ENCODE measurements at regions of chr19 and their contacts with region 1.

Region 1: GRCh38 chr19:34145741-34146202 is 26.5 kb upstream of the LSM14A start:
- DNase-seq: peak; percentile 64
- H3K4me3 Mint-ChIP-seq: no peak overlapping the region
- H3K27ac Mint-ChIP-seq: no peak overlapping the region
- H3K4me1 Mint-ChIP-seq: no peaks in the 10 kb centered on the region
- H3K27me3 Mint-ChIP-seq: no peaks in the 10 kb centered on the region

Region 2: GRCh38 chr19:34041925-34042521 is 103.7 kb before region 1 on chr19:
- CTCF ChIA-PET with region 1: interaction called, 17 read pairs
- POLR2A ChIA-PET with region 1: no interaction called
- DNase-seq: peak; percentile 76
- H3K4me3 Mint-ChIP-seq: no peak overlapping the region
- H3K27ac Mint-ChIP-seq: no peak overlapping the region
- H3K4me1 Mint-ChIP-seq: no peaks in the 10 kb centered on the region
- H3K27me3 Mint-ChIP-seq: peaks cover 6% of the 10 kb centered on the region

Region 3: GRCh38 chr19:34134190-34135053 is 11.3 kb before region 1 on chr19:
- CTCF ChIA-PET with region 1: interaction called, 11 read pairs
- POLR2A ChIA-PET with region 1: interaction called, 8 read pairs
- DNase-seq: peak; percentile 92
- H3K4me3 Mint-ChIP-seq: peak overlapping the region; percentile 89
- H3K27ac Mint-ChIP-seq: peak overlapping the region; percentile 85
- H3K4me1 Mint-ChIP-seq: peaks cover 12% of the 10 kb centered on the region
- H3K27me3 Mint-ChIP-seq: no peaks in the 10 kb centered on the region

Measured in activated CD4-positive, alpha-beta memory T cell treated with anti-CD3 and anti-CD28 coated beads, Interleukin-2, amount 10 ng/mL, durations not matched to agents 7 days and 5 days (primary cell).